Activated naive CD4-positive, alpha-beta T cell treated with anti-CD3 and anti-CD28 coated beads for 36 hours (primary cell): ENCODE measurements at regions of chr15 and their contacts with region 1.

Region 1: GRCh38 chr15:65304389-65305144 is at the start of gene RNU5B-1:
- DNase-seq: peak; percentile 86
- H3K4me3 Mint-ChIP-seq: peak within 1 kb of the TSS; percentile 89
- H3K27ac Mint-ChIP-seq: peak within 1 kb of the TSS; percentile 97
- H3K4me1 Mint-ChIP-seq: peaks cover 24% of the 10 kb centered on the region
- H3K27me3 Mint-ChIP-seq: peaks cover 4% of the 10 kb centered on the region
- total RNA-seq, gene RNU5B-1: not detected

Region 2: DNA sequence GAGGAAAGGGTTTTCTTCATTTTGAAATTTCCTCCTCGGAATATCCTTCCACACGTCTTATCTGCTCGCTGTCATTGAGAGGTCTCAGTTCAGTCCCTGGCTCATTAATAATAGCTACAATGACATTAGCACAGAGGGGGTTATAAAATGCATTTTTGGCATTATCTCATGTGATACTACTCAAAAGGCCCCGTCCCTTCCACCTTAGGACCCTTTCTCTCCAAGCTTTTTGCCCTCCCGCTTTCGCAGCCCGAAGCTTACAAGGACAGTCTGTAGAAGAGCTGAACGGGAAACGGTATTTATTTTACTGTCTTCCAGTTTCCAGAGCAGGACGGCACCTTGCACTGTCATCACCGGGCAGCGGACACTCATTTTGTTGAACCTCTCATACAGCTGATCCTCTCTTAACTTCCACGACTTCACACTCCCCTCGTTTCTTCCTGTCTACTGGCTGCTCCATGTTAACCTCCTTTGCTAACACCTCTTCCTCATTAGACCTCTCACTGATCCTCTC is 468.5 kb before region 1 on chr15:
- CTCF ChIA-PET with region 1: no interaction called
- intact Hi-C with region 1: loop called (anchors 5 kb)
- DNase-seq: no peak
- H3K4me3 Mint-ChIP-seq: peak overlapping the region; percentile 55
- H3K27ac Mint-ChIP-seq: peak overlapping the region; percentile 64
- H3K4me1 Mint-ChIP-seq: peaks cover 36% of the 10 kb centered on the region
- H3K27me3 Mint-ChIP-seq: no peaks in the 10 kb centered on the region